ENCODE measurements at regions of chr12 and their contacts with region 1.

Region 1: GRCh38 chr12:75722714-75723200 is 211.3 kb upstream of the KRR1 start:
- DNase-seq: peak; percentile 29
- H3K4me3 Mint-ChIP-seq: peak overlapping the region; percentile 37
- H3K27ac Mint-ChIP-seq: peak overlapping the region; percentile 81
- H3K4me1 Mint-ChIP-seq: peaks cover 16% of the 10 kb centered on the region
- H3K27me3 Mint-ChIP-seq: peaks cover 3% of the 10 kb centered on the region

Region 2: GRCh38 chr12:75759842-75760572 is 37.2 kb after region 1 on chr12:
- intact Hi-C with region 1: loop called (anchors 5 kb)
- DNase-seq: no peak
- H3K4me3 Mint-ChIP-seq: no peak overlapping the region
- H3K27ac Mint-ChIP-seq: no peak overlapping the region
- H3K4me1 Mint-ChIP-seq: peaks cover 15% of the 10 kb centered on the region
- H3K27me3 Mint-ChIP-seq: peaks cover 13% of the 10 kb centered on the region

Measured in activated T-helper 1 cell treated with anti-CD3 and anti-CD28 coated beads, Interleukin-12 subunit alpha, Interleukin-12 subunit beta, Interleukin-2, Interleukin-4 antibody, amounts not matched to agents 30 ng/mL and 10 ng/mL and 1 ng/mL, durations not matched to agents 14 hours and 24 hours and 36 hours (primary cell).